Caco-2 (cell line): ENCODE measurements at regions of chr12 and their contacts with region 1.

Region 1: GRCh38 chr12:6867413-6868210 is at the start of gene TPI1:
- DNase-seq: peak; percentile 88 to 92
- H3K4me3 ChIP-seq: peak within 1 kb of the TSS; percentile 97
- H3K4me3 Mint-ChIP-seq: peak within 1 kb of the TSS; percentile 95
- H3K27ac Mint-ChIP-seq: peak within 1 kb of the TSS; percentile 94
- H3K4me1 ChIP-seq: peaks cover 31% of the 10 kb centered on the region
- H3K4me1 Mint-ChIP-seq: peaks cover 47% of the 10 kb centered on the region
- H3K27me3 ChIP-seq: no peaks in the 10 kb centered on the region
- H3K27me3 Mint-ChIP-seq: no peaks in the 10 kb centered on the region
- CTCF ChIP-seq: no peak
- total RNA-seq, gene TPI1: 1,141 and 1,254 TPM in 2 replicates

Region 2: DNA sequence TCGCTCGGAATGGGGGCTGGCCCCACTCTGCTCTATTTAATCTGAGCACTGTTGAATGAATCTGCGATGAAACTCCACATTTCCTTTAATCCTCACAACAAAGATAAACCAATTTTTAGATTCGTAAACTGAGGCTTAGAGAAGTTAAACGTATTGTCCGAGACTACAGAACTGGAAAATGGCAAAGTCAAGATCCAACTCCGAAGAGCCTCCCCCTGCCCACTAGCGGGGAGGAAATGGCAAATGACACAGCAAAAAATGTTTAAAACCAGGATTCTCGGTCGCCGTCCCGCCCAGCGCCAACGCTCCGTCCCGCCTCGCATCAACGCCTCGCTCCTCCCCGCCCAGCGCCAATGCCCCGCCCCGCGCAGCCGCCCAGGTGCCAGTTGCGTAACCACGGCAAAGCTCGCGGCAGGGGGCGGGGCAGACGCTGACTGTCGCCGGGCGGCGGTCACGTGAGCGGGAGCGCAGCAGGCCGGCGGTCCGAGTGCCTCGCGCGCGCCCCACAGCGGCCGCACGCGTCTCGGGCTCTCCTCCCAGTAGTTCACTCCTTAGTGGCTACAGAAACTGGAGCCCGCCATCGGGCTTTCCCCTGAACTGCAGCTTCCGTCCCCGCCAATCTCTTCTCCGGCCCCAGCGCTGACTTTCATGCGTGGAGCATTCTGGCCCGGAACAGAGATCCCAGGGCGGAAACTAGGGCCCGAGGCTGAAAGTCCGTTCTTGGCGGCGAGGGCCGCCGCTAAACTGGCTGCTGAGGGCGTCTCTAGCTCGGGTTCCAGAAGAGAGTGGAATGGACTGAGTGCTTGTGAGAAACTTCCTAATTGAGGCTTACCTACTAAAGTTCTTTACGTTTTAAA is 23.4 kb after region 1 on chr12:
- CTCF ChIA-PET with region 1: interaction called, 87 read pairs
- POLR2A ChIA-PET with region 1: interaction called, 56 read pairs
- intact Hi-C with region 1: loop called (anchors 1 kb)
- DNase-seq: peak; percentile 98 to 100
- H3K4me3 ChIP-seq: peak overlapping the region; percentile 34
- H3K4me3 Mint-ChIP-seq: peak overlapping the region; percentile 80
- H3K27ac Mint-ChIP-seq: peak overlapping the region; percentile 96
- H3K4me1 ChIP-seq: peaks cover 37% of the 10 kb centered on the region
- H3K4me1 Mint-ChIP-seq: peaks cover 5% of the 10 kb centered on the region
- H3K27me3 ChIP-seq: no peaks in the 10 kb centered on the region
- H3K27me3 Mint-ChIP-seq: no peaks in the 10 kb centered on the region
- CTCF ChIP-seq: peak; percentile 82 to 95

Region 3: GRCh38 chr12:6904280-6905278 is 37.0 kb after region 1 on chr12 and contains the start of gene LRRC23:
- CTCF ChIA-PET with region 1: interaction called, 10 read pairs
- POLR2A ChIA-PET with region 1: interaction called, 4 read pairs
- intact Hi-C with region 1: no loop called
- DNase-seq: peak; percentile 98 to 99
- H3K4me3 ChIP-seq: peak within 1 kb of the TSS; percentile 64
- H3K4me3 Mint-ChIP-seq: no peak within 1 kb of the TSS
- H3K27ac Mint-ChIP-seq: no peak within 1 kb of the TSS
- H3K4me1 ChIP-seq: peaks cover 20% of the 10 kb centered on the region
- H3K4me1 Mint-ChIP-seq: peaks cover 10% of the 10 kb centered on the region
- H3K27me3 ChIP-seq: no peaks in the 10 kb centered on the region
- H3K27me3 Mint-ChIP-seq: no peaks in the 10 kb centered on the region
- CTCF ChIP-seq: no peak
- total RNA-seq, gene LRRC23: 7.8 and 8.6 TPM in 2 replicates

Region 4: DNA sequence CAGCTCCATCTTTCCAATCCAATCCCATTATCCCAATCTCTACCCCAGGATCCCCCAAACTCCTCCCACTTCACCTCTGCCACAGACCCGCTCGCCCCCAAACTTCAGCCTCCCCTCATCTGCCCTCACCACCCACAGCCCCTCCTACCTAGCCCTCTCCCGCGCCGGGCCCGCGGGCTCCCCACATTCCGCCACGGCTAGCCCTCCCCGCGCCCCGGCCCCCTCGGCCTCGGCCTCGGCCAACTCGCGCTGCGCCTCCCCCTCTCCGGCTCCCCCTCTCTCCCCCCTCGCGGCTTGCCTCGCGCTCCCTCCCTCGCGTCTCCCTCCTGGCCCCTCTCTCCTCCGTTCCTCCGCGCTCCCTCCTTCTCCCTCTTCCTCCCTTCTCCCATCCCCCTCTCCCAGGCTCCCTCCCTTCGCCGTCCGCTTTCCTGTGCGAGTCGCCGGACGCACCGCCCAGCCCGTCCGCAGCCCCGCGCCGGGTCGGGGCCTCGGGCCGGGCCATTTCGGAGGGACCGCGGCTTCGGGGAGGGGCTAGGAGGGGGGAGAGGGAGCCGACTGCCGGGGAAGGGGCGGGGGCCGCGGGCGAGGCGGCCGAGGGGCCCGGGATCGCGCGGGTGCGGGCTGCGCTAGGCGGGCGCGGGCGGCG is 59.9 kb after region 1 on chr12 and contains the start of gene ATN1:
- CTCF ChIA-PET with region 1: interaction called, 23 read pairs
- POLR2A ChIA-PET with region 1: interaction called, 3 read pairs
- intact Hi-C with region 1: loop called (anchors 2 kb)
- DNase-seq: peak; percentile 85 to 87
- H3K4me3 ChIP-seq: peak within 1 kb of the TSS; percentile 91
- H3K4me3 Mint-ChIP-seq: peak within 1 kb of the TSS; percentile 85
- H3K27ac Mint-ChIP-seq: peak within 1 kb of the TSS; percentile 76
- H3K4me1 ChIP-seq: peaks cover 43% of the 10 kb centered on the region
- H3K4me1 Mint-ChIP-seq: peaks cover 66% of the 10 kb centered on the region
- H3K27me3 ChIP-seq: no peaks in the 10 kb centered on the region
- H3K27me3 Mint-ChIP-seq: no peaks in the 10 kb centered on the region
- CTCF ChIP-seq: no peak
- total RNA-seq, gene ATN1: 126 TPM in 2 replicates

Region 5: GRCh38 chr12:6937481-6938297 is 70.1 kb after region 1 on chr12:
- CTCF ChIA-PET with region 1: interaction called, 37 read pairs
- POLR2A ChIA-PET with region 1: interaction called, 17 read pairs
- intact Hi-C with region 1: loop called (anchors 1 kb)
- DNase-seq: peak; percentile 97
- H3K4me3 ChIP-seq: peak overlapping the region; percentile 55
- H3K4me3 Mint-ChIP-seq: peak overlapping the region; percentile 73
- H3K27ac Mint-ChIP-seq: peak overlapping the region; percentile 92
- H3K4me1 ChIP-seq: peaks cover 10% of the 10 kb centered on the region
- H3K4me1 Mint-ChIP-seq: peaks cover 25% of the 10 kb centered on the region
- H3K27me3 ChIP-seq: no peaks in the 10 kb centered on the region
- H3K27me3 Mint-ChIP-seq: no peaks in the 10 kb centered on the region
- CTCF ChIP-seq: peak; percentile 98 to 99